MCF 10A (cell line): ENCODE measurements at regions of chr4 and their contacts with region 1.

Region 1: DNA sequence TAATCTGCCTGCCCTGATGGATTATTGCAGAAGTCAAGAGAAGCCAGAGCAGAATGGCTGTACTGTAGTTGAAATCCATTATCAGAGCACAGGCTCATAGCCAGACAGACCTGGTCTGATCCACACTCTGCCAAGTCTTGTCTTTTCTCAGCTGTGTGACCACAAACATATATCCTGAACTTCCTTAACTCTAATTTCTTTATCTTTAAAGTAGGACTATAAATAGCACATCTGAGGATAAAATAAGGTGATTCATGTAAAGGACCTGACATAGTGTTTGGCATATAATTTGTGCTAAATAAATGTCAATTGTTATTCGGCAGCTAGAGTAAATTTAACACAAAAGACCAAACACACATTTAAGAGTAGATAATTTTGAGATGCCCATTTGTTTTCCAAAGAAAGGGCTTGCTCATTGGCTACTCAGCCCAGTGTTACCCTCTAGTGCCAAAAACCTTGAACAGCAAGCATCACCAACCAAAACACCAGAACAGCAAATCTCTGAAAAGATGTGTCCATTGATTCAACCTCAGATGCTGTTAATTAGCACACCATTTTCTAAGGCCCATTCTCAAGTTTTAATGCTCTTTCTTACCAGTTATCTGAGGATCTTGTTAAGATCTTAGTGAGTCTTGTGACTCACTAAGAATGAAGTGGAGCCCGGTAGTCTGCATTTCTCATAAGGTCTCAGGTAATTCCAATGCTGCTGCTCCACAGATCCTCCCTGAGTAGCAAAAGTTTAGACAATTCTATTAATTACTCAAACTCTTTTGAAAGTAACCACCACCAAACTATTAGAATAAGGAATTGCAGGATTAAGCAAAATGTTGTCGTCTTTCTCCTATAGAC is 108.8 kb downstream of the HHIP start:
- DNase-seq: peak; percentile 35
- H3K4me3 Mint-ChIP-seq: no peak overlapping the region
- H3K27ac Mint-ChIP-seq: no peak overlapping the region
- H3K4me1 Mint-ChIP-seq: no peaks in the 10 kb centered on the region
- H3K27me3 Mint-ChIP-seq: no peaks in the 10 kb centered on the region
- CTCF ChIP-seq: peak; percentile 66

Region 2: DNA sequence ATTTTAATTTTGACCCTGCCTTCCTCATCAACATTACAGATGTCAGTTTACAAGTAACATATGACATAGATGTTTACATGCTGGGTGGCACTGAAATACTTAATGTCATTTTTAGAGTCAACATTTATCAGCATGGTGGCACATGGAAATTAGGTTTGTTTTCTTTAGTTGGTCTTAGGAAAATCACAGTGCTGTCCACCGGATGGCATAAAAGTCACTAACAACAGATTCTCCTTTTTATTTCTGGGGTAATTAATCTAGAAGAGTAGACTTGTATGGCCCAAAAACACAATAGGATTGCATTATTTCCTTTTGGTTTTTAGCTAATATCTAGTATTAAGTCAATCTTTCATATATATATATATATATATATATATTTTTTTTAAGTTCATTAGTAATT is 197.4 kb before region 1 on chr4:
- CTCF ChIA-PET with region 1: no interaction called
- POLR2A ChIA-PET with region 1: no interaction called
- intact Hi-C with region 1: loop called (anchors 1 kb)
- DNase-seq: peak; percentile 14
- H3K4me3 Mint-ChIP-seq: no peak overlapping the region
- H3K27ac Mint-ChIP-seq: no peak overlapping the region
- H3K4me1 Mint-ChIP-seq: no peaks in the 10 kb centered on the region
- H3K27me3 Mint-ChIP-seq: no peaks in the 10 kb centered on the region
- CTCF ChIP-seq: peak; percentile 20